Mucosa of descending colon (tissue), 3 donors: ENCODE measurements at regions of chr1 and their contacts with region 1.

Region 1: DNA sequence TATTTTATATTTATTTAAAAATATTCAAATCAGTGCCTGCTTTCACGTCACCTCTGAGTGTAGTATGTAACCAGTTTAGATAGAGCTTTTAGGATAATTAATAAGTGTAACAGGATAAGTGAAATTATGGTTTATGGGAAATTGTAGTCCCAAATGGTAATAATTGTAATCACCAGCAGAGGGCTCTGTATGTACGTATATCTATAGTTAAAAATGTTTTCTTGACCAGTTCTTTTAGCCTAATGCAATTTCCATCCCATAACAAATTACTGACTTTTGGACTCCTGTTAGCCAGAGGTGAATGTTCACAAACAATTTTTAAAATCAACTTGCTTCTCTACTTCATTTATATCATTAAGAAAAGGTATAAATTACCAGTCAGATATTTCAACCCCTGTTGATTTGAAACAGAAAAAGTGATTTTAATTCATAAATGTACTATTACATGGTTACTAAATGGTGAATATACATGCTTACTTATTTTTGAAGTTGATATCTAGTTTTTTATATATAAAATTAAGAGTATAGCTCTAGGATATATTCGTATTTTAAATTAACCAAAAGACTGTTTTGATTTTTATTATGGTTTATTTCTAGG is 25.3 kb downstream of the SLC30A7 start:
- DNase-seq: peak in 1 of 3 donors; percentile 46
- ATAC-seq: peak; percentile 49
- H3K4me3 ChIP-seq: no peak overlapping the region
- H3K4me1 ChIP-seq: no peaks in the 10 kb centered on the region
- CTCF ChIP-seq: peak; percentile 26

Region 2: GRCh38 chr1:101025657-101026504 is 104.7 kb after region 1 on chr1 and contains the start of gene DPH5:
- intact Hi-C with region 1: no loop called
- DNase-seq: peak; percentile 93 to 96 (median 94)
- ATAC-seq: peak; percentile 99
- H3K4me3 ChIP-seq: peak within 1 kb of the TSS; percentile 49
- H3K4me1 ChIP-seq: peaks cover 12% of the 10 kb centered on the region
- CTCF ChIP-seq: no peak
- total RNA-seq, gene DPH5: 15.4 to 23.1 (median 22.3) TPM

Region 3: GRCh38 chr1:101112051-101112780 is 191.0 kb after region 1 on chr1:
- intact Hi-C with region 1: no loop called
- DNase-seq: peak; percentile 21 to 73 (median 31)
- ATAC-seq: peak; percentile 88
- H3K4me3 ChIP-seq: no peak overlapping the region
- H3K4me1 ChIP-seq: no peaks in the 10 kb centered on the region
- CTCF ChIP-seq: no peak

Region 4: GRCh38 chr1:101238681-101239094 is 317.5 kb after region 1 on chr1:
- intact Hi-C with region 1: loop called in 1 of 2 experiments (anchors 10 kb)
- DNase-seq: peak; percentile 85 to 88 (median 86)
- ATAC-seq: peak; percentile 76
- H3K4me3 ChIP-seq: no peak overlapping the region
- H3K4me1 ChIP-seq: peaks cover 24% of the 10 kb centered on the region
- CTCF ChIP-seq: peak; percentile 92

Region 5: GRCh38 chr1:101288491-101288944 is 367.3 kb after region 1 on chr1:
- intact Hi-C with region 1: loop called (anchors 5 to 10 kb)
- DNase-seq: peak in 1 of 3 donors; percentile 89
- ATAC-seq: peak; percentile 95
- H3K4me3 ChIP-seq: no peak overlapping the region
- H3K4me1 ChIP-seq: peaks cover 5% of the 10 kb centered on the region
- CTCF ChIP-seq: peak; percentile 75